CD4-positive, alpha-beta T cell (primary cell): ENCODE measurements at regions of chrX and their contacts with region 1.

Region 1: DNA sequence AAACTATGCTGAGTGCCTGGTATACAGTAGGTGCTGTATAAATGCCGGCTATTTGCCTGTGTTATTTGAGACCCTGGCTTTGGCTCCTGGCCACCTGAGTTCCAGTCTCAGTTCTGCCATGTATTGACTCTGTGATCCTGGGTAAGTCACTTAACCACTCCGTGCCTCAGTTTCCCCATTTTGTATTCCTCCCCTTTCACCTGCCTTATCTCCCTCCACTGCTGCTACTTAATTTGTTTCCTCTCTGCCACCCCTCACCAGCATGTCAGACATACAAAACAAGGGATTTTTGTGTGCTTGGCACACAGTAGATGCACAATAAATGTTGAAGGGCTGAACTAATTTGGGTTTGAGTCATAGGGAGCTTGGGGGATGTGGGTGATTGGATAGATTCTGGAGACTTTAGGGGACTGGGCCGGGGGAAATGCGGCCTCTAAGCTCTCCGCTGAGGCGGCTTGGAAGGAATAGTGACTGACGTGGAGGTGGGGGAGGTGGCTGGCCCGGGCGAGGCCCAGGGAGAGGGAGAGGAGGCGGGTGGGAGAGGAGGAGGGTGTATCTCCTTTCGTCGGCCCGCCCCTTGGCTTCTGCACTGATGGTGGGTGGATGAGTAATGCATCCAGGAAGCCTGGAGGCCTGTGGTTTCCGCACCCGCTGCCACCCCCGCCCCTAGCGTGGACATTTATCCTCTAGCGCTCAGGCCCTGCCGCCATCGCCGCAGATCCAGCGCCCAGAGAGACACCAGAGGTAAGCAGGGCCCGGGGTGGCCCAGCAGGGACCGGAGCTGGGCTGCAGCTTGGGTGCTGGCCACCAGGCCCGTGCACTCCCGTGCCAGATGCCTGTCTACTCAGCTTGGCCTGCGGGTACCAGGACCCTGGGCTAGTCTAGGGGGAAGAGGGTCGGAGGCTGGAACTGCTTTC is at the start of gene TIMP1:
- DNase-seq: peak; percentile 50 to 89 (median 75)
- ATAC-seq: peak; percentile 97
- H3K4me3 ChIP-seq: peak within 1 kb of the TSS; percentile 67
- H3K4me3 Mint-ChIP-seq: peak within 1 kb of the TSS; percentile 58
- H3K27ac ChIP-seq: peak within 1 kb of the TSS; percentile 59 to 74
- H3K27ac Mint-ChIP-seq: peak within 1 kb of the TSS; percentile 77
- H3K4me1 ChIP-seq: peaks cover 45% of the 10 kb centered on the region
- H3K4me1 Mint-ChIP-seq: peaks cover 28% of the 10 kb centered on the region
- H3K27me3 ChIP-seq: no peaks in the 10 kb centered on the region
- H3K27me3 Mint-ChIP-seq: no peaks in the 10 kb centered on the region
- CTCF ChIP-seq: no peak
- total RNA-seq, gene TIMP1: 35.6 to 38.5 TPM

Region 2: DNA sequence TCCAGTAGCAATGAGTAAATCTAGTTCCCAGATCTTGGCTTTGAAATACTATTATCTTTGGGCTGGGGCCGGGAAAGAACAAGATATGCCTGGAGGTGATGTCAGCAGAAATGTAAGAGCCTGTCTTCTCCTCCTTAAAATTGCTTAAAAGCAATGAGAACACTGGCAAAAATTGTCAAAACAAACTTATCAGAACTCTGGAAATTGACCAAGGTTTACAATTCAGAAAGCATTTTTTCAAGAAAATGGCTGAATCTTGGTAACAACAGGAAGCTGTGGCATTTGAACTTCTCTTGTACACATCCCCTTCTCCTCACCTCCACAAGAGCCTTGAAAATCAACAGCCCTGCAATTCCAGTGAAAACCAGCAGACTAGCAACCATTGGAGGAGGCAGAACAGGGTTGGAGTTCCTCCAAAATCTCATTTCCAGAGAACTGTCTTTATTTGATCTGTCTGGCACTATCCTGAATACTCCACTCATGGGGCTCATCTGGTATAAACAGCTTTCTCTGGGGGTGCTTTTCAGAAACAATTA is 13.8 kb after region 1 on chrX:
- CTCF ChIA-PET with region 1: no interaction called
- POLR2A ChIA-PET with region 1: interaction called, 11 read pairs
- intact Hi-C with region 1: no loop called
- DNase-seq: peak in 1 of 14 experiments; percentile 22
- ATAC-seq: no peak
- H3K4me3 ChIP-seq: no peak overlapping the region
- H3K4me3 Mint-ChIP-seq: no peak overlapping the region
- H3K27ac ChIP-seq: peak overlapping the region in 1 of 2 donors; percentile 25
- H3K27ac Mint-ChIP-seq: peak overlapping the region; percentile 82
- H3K4me1 ChIP-seq: peaks cover 11% of the 10 kb centered on the region
- H3K4me1 Mint-ChIP-seq: peaks cover 20% of the 10 kb centered on the region
- H3K27me3 ChIP-seq: no peaks in the 10 kb centered on the region
- H3K27me3 Mint-ChIP-seq: no peaks in the 10 kb centered on the region
- CTCF ChIP-seq: no peak

Region 3: DNA sequence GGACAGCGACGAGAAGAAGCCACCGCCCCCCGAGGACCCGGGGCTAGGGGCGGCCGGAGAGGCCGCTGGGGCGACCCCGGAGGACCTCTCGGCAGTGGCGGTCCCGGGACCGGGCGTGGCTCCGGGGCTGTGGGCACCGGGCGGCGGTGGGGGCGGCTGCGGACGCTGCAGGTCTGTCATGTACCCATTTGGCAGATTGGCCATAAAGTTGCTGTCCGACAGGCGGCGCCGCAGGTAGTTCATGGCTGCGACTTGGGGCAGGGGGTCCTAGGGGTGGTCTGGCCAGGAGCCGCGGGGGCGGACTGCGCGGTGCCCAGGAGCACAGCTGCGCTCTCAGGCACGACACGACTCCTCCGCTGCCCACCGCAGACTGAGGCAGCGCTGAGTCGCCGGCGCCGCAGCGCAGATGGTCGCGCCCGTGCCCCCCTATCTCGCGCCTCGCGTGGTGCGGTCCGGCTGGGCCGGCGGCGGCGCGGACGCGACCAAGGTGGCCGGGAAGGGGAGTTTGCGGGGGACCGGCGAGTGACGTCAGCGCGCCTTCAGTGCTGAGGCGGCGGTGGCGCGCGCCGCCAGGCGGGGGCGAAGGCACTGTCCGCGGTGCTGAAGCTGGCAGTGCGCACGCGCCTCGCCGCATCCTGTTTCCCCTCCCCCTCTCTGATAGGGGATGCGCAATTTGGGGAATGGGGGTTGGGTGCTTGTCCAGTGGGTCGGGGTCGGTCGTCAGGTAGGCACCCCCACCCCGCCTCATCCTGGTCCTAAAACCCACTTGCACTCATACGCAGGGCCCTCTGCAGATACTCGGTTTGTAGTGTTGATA is 37.7 kb after region 1 on chrX and contains the start of gene SYN1:
- CTCF ChIA-PET with region 1: no interaction called
- POLR2A ChIA-PET with region 1: interaction called, 5 read pairs
- intact Hi-C with region 1: loop called in 1 of 2 experiments (anchors 5 kb)
- DNase-seq: peak; percentile 63 to 93 (median 77)
- ATAC-seq: peak; percentile 80
- H3K4me3 ChIP-seq: peak within 1 kb of the TSS; percentile 42
- H3K4me3 Mint-ChIP-seq: peak within 1 kb of the TSS; percentile 61
- H3K27ac ChIP-seq: no peak within 1 kb of the TSS
- H3K27ac Mint-ChIP-seq: no peak within 1 kb of the TSS
- H3K4me1 ChIP-seq: peaks cover 24% of the 10 kb centered on the region
- H3K4me1 Mint-ChIP-seq: peaks cover 28% of the 10 kb centered on the region
- H3K27me3 ChIP-seq: no peaks in the 10 kb centered on the region
- H3K27me3 Mint-ChIP-seq: no peaks in the 10 kb centered on the region
- CTCF ChIP-seq: no peak
- total RNA-seq, gene SYN1: 0.27 to 0.87 TPM